Tibial artery (tissue), 4 donors: ENCODE measurements at regions of chr1 and their contacts with region 1.

Region 1: GRCh38 chr1:234610348-234611152 is 572 bp upstream of the IRF2BP2 start:
- DNase-seq: peak; percentile 91 to 98
- H3K4me3 ChIP-seq: peak overlapping the region; percentile 62 to 94
- H3K27ac ChIP-seq: peak overlapping the region; percentile 96 to 98
- H3K4me1 ChIP-seq: peaks cover 0 to 46% (median 29%) of the 10 kb centered on the region in 4 donors
- H3K27me3 ChIP-seq: no peaks in the 10 kb centered on the region
- CTCF ChIP-seq: peak; percentile 6 to 13

Region 2: GRCh38 chr1:234409328-234409727 is 201.2 kb before region 1 on chr1:
- intact Hi-C with region 1: no loop called
- DNase-seq: no peak
- H3K4me3 ChIP-seq: no peak overlapping the region
- H3K27ac ChIP-seq: no peak overlapping the region
- H3K4me1 ChIP-seq: no peaks in the 10 kb centered on the region
- H3K27me3 ChIP-seq: no peaks in the 10 kb centered on the region
- CTCF ChIP-seq: no peak

Region 3: DNA sequence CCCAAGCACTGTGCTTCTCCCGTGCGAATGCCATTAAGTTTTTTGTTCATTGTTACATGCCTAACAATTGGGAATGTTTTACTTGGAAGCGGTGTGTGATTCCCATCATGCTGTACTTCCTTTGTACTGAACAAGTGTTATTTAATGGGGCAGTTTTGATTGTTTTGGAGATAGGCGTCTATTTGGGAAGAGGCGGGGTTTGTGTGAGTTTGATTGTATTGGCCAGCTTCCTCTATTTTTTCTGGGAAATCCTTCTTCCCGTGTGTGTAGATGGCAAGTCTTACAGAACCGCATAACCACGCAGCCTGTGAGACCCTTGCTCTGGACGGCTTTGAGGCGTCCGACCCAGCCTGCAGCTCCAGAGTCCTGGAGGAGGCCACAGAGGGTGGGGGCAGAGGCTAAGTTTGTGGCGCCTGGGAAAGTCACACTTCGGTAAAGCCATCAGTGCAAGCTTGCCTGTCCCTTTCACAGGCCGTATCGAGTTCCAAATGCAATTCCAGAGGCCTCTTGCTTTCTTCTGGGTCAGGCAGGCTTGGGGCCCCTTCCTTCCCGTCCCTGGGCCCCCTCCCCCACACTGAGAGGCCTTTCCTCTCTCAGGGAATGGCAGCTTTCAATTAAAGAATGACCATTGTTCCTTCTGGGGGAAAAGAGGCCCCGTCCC is 307.8 kb after region 1 on chr1:
- intact Hi-C with region 1: loop called (anchors 5 kb)
- DNase-seq: peak in 1 of 2 donors; percentile 74
- H3K4me3 ChIP-seq: no peak overlapping the region
- H3K27ac ChIP-seq: peak overlapping the region; percentile 80 to 85
- H3K4me1 ChIP-seq: peaks cover 10 to 87% (median 76%) of the 10 kb centered on the region in 4 donors
- H3K27me3 ChIP-seq: no peaks in the 10 kb centered on the region
- CTCF ChIP-seq: no peak

Region 4: DNA sequence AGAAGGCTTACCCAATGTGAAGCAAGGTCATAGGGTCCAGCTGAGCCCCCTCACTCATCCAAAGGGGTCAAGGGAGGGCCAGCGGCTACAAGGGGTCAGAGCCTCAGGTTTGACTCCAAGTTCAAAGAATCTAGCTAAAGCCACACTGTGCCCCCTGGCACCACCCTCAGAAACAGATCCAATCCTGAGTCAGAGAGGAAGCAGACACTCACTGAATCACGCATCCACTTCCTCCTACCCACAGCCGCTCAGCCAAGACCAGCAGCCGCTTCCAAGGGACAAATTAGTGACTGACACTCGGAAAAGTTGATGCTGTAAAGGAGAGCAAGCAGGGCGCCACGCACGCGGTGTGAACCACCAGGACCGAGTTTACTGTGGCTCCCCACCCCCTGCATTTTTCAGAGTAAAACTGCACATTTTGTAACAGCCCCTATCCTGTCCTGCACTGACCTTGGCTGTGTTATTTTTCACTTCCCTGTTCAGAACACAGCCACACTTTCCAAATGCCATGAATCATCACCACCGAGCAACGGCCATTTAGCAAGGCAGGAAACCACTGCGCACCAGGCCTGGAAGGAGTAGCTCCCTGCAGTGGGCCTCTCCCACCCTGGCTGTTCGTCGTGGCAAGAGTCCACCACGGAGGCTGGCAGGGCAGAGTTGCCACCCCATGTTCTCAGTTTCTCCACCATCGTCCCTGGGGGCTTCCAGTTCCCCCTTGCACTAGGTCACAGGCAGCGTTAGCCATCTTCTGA is 370.3 kb after region 1 on chr1:
- intact Hi-C with region 1: loop called (anchors 5 kb)
- DNase-seq: peak; percentile 93 to 95
- H3K4me3 ChIP-seq: peak overlapping the region; percentile 7 to 17
- H3K27ac ChIP-seq: peak overlapping the region; percentile 87
- H3K4me1 ChIP-seq: peaks cover 9 to 88% (median 55%) of the 10 kb centered on the region in 4 donors
- H3K27me3 ChIP-seq: no peaks in the 10 kb centered on the region
- CTCF ChIP-seq: no peak

Region 5: GRCh38 chr1:234997201-234997895 is 386.8 kb after region 1 on chr1:
- intact Hi-C with region 1: loop called (anchors 5 kb)
- DNase-seq: peak; percentile 100
- H3K4me3 ChIP-seq: peak overlapping the region in 1 of 2 donors; percentile 11
- H3K27ac ChIP-seq: peak overlapping the region; percentile 83 to 86
- H3K4me1 ChIP-seq: peaks cover 0 to 28% (median 25%) of the 10 kb centered on the region in 4 donors
- H3K27me3 ChIP-seq: no peaks in the 10 kb centered on the region
- CTCF ChIP-seq: no peak

Region 6: GRCh38 chr1:235079443-235080296 is 469.1 kb after region 1 on chr1:
- intact Hi-C with region 1: loop called (anchors 5 kb)
- DNase-seq: no peak
- H3K4me3 ChIP-seq: no peak overlapping the region
- H3K27ac ChIP-seq: peak overlapping the region; percentile 14 to 47
- H3K4me1 ChIP-seq: peaks cover 0 to 71% (median 58%) of the 10 kb centered on the region in 4 donors
- H3K27me3 ChIP-seq: no peaks in the 10 kb centered on the region
- CTCF ChIP-seq: no peak